Right cardiac atrium (tissue), 5 donors: ENCODE measurements at regions of chr11 and their contacts with region 1.

Region 1: GRCh38 chr11:27820249-27820648 is 120.0 kb upstream of the BDNF start:
- DNase-seq: no peak
- ATAC-seq: no peak
- H3K4me3 ChIP-seq: no peak overlapping the region
- H3K27ac ChIP-seq: no peak overlapping the region
- H3K4me1 ChIP-seq: no peaks in the 10 kb centered on the region
- H3K27me3 ChIP-seq: no peaks in the 10 kb centered on the region

Region 2: DNA sequence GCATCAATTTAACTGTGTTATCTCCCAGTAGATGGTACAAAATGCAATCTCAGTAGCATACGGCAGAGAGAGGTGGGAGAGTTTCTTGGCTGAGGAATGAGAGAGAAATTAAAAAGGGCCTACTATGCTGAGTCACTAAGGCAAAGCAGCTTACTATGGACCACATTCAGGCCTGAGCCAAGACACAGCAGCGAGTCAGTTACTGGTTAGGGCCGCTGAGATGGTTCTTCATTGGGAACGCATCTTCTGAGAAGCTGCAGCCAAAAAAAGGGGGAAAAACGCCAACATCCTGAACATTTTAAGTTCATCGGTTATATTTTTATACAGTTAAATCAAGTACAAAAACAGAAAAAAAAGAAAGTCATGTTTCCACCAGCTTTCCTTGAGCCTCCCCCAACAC is 58.9 kb before region 1 on chr11:
- intact Hi-C with region 1: loop called in 1 of 4 experiments (anchors 10 kb)
- DNase-seq: no peak
- ATAC-seq: no peak
- H3K4me3 ChIP-seq: no peak overlapping the region
- H3K27ac ChIP-seq: no peak overlapping the region
- H3K4me1 ChIP-seq: no peaks in the 10 kb centered on the region
- H3K27me3 ChIP-seq: no peaks in the 10 kb centered on the region

Region 3: DNA sequence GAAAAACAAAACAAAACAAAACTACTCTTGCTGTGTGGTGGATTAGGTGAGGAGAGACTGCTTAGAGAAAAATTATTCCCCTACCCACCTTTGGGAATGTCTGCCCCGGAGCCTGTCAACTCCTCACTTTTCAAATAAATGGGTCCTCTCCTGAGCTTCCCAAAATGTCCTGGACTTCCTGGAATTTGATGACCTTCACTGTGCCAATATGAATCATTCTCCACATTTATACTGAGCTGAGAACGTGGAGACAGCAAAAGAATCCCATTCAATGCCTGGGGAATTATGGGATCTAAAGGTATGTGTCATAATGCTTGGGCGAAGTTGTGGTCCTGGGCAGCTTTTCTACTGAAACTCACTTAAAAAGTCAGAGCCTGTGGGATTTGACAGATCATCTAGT is 150.9 kb after region 1 on chr11:
- intact Hi-C with region 1: no loop called
- DNase-seq: no peak
- ATAC-seq: no peak
- H3K4me3 ChIP-seq: no peak overlapping the region
- H3K27ac ChIP-seq: no peak overlapping the region
- H3K4me1 ChIP-seq: peaks cover 3% of the 10 kb centered on the region
- H3K27me3 ChIP-seq: no peaks in the 10 kb centered on the region